ENCODE measurements at regions of chr6 and their contacts with region 1.

Region 1: GRCh38 chr6:118800394-118801071 is 93.4 kb upstream of the ASF1A start:
- DNase-seq: peak; percentile 78
- H3K4me3 ChIP-seq: peak overlapping the region in 1 of 2 experiments; percentile 30; a peak in 2 of 4 replicates
- H3K27ac ChIP-seq: no peak overlapping the region
- H3K4me1 ChIP-seq: peaks cover 0 to 5% of the 10 kb centered on the region in 2 experiments; a peak in 2 of 4 replicates
- H3K27me3 ChIP-seq: no peaks in the 10 kb centered on the region
- CTCF ChIP-seq: peak; percentile 89
- EP300 ChIP-seq: no peak
- RAD21 ChIP-seq: peak; percentile 83

Region 2: GRCh38 chr6:118787724-118788423 is 12.7 kb before region 1 on chr6:
- CTCF ChIA-PET with region 1: interaction called, 41 read pairs
- POLR2A ChIA-PET with region 1: no interaction called
- DNase-seq: no peak
- H3K4me3 ChIP-seq: no peak overlapping the region
- H3K27ac ChIP-seq: no peak overlapping the region
- H3K4me1 ChIP-seq: peaks cover 0 to 13% of the 10 kb centered on the region in 2 experiments; a peak in 3 of 4 replicates
- H3K27me3 ChIP-seq: no peaks in the 10 kb centered on the region
- CTCF ChIP-seq: no peak
- EP300 ChIP-seq: no peak
- RAD21 ChIP-seq: no peak

Measured in SK-N-SH (cell line).